MCF 10A (cell line): ENCODE measurements at regions of chr6 and their contacts with region 1.

Region 1: DNA sequence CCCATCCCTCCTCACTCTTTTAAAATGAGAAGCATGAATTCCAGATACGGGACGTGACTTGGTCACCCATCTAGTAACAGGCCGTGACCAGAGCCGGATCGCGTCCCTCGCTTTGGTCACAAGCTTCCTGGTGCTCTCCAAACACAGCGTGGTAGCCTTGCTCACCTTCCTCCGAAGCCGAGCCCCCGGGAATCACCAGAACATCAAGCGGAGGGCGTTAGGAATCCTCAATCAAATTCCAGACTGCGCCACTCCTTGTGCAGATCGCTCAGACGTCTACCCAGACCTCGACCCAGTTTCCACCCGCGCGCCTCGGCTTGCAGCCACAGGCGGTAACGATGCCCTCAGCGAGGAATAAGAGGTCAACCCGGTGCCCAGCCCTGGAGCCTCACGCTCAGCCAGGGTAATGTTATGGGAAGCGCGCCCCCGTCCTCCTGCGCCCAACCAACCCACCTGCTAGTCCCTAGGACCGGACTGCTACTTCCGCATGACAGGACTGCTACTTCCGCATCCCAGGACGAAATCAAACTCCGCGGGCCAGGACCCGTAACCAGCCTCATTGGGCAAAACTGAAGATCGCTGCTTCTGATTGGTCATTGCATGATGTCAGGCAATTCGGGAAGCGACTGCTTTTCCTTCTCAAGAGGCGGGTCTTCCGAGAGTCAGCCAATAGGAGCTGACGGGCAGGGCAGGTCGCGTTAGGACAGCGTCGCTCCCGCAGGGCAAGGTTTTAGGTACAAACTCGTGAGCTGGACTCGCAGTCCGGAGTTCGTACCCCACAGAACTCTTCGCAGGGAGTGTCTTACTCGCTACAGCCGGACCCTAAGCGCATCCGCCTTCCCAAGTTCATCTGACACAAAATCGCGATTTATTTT is at the start of gene MTFR2:
- DNase-seq: peak; percentile 100
- H3K4me3 Mint-ChIP-seq: peak within 1 kb of the TSS; percentile 97
- H3K27ac Mint-ChIP-seq: peak within 1 kb of the TSS; percentile 82
- H3K4me1 Mint-ChIP-seq: peaks cover 12% of the 10 kb centered on the region
- H3K27me3 Mint-ChIP-seq: no peaks in the 10 kb centered on the region
- CTCF ChIP-seq: no peak
- total RNA-seq, gene MTFR2: 5.2 and 6.0 TPM in 2 replicates

Region 2: DNA sequence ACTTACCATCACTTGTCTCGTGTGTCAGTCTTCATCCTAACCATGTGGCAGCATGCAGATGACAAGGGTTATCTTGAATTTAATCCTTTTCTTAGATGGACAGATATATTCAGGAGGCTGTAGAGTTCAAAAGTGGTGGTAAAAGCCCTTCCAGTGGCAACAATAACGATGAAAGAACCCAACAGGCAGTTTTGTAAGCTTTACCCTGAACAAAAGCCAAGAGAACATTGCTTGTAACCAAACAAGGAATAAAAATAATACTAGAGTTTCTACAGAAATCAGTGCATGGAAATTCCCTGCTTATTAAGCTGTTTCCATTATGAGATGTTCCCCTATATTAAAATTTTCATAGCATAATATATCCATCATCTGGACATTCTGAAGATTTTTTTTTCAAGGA is 328.9 kb before region 1 on chr6:
- CTCF ChIA-PET with region 1: no interaction called
- POLR2A ChIA-PET with region 1: no interaction called
- intact Hi-C with region 1: no loop called
- DNase-seq: no peak
- H3K4me3 Mint-ChIP-seq: no peak overlapping the region
- H3K27ac Mint-ChIP-seq: peak overlapping the region; percentile 93
- H3K4me1 Mint-ChIP-seq: peaks cover 14% of the 10 kb centered on the region
- H3K27me3 Mint-ChIP-seq: no peaks in the 10 kb centered on the region
- CTCF ChIP-seq: no peak

Region 3: DNA sequence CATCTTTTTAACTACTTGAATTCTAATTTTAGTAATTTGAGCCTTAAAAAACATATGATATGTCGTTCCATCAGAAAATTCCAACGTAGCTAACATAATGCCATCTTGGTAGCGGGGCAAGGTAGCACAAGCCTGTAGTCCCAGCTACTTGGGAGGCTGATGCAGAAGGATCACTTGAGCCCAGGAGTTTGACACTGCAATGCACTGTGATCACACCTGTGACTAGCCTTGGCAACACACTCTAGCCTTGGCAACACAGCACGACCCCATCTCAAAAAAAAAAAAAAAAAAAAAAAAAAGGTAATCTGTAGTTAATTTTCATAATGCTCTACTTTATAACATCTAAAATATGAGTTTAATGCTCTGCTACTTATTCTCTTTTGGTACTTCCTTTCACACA is 32.9 kb after region 1 on chr6:
- CTCF ChIA-PET with region 1: interaction called, 3 read pairs
- POLR2A ChIA-PET with region 1: interaction called, 122 read pairs
- intact Hi-C with region 1: no loop called
- DNase-seq: no peak
- H3K4me3 Mint-ChIP-seq: no peak overlapping the region
- H3K27ac Mint-ChIP-seq: no peak overlapping the region
- H3K4me1 Mint-ChIP-seq: peaks cover 52% of the 10 kb centered on the region
- H3K27me3 Mint-ChIP-seq: no peaks in the 10 kb centered on the region
- CTCF ChIP-seq: no peak

Region 4: GRCh38 chr6:136326038-136326553 is 76.0 kb after region 1 on chr6:
- CTCF ChIA-PET with region 1: no interaction called
- POLR2A ChIA-PET with region 1: no interaction called
- intact Hi-C with region 1: no loop called
- DNase-seq: no peak
- H3K4me3 Mint-ChIP-seq: no peak overlapping the region
- H3K27ac Mint-ChIP-seq: no peak overlapping the region
- H3K4me1 Mint-ChIP-seq: no peaks in the 10 kb centered on the region
- H3K27me3 Mint-ChIP-seq: no peaks in the 10 kb centered on the region
- CTCF ChIP-seq: no peak